A673 (cell line): ENCODE measurements at regions of chr14 and their contacts with region 1.

Region 1: DNA sequence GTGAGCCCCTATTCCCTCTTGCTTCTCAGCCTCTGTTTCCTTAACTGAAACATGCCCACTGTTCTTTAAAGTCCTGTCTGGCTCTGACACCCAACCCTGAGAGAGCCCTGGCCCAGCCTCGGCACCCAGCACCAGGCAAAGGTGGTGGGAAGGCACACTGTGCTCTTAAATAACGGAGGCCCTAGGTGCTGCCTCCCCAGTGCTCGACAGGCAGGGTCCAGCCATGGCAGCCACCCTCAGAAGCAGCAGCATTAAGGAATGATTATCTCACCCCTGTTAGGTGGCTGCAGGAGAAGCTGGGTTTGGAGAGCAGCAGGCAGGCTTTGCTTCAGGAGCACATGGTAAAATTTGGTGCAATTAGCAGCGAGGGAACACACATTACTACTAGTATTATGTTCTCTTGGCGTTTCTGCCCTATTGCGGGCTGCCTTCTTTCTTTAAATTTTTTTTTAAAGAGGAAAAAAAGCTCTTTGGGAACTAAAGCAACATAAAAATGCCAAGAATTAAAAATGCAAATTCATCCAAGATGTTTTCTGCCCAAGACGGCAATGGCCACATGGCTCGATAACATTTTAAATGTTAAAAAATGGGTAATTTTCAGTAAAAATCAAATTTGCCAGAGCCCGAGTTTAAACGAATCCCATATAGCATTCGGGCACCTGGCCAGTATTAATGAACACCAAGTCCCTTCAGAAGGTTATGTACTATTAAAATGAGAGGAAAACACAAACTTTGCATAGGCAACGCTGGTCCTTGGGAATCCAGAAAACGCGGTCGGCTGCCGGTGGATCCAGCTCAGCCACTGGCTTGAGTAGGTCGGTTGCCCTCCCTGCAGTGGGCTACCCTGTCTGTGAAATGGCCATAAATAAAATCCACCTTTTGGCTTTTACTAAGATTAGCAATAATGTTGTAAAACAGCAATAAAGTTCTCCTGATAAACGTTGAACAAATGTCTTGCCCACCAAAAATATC is 152.2 kb downstream of the BCL11B start:
- DNase-seq: no peak
- H3K4me3 ChIP-seq: no peak overlapping the region
- H3K27ac ChIP-seq: no peak overlapping the region
- H3K4me1 ChIP-seq: no peaks in the 10 kb centered on the region
- H3K27me3 ChIP-seq: no peaks in the 10 kb centered on the region
- CTCF ChIP-seq: no peak

Region 2: GRCh38 chr14:97762386-97762785 is 1357.5 kb before region 1 on chr14:
- CTCF ChIA-PET with region 1: interaction called, 10 read pairs
- POLR2A ChIA-PET with region 1: no interaction called
- intact Hi-C with region 1: no loop called
- DNase-seq: peak; percentile 31
- H3K4me3 ChIP-seq: no peak overlapping the region
- H3K27ac ChIP-seq: no peak overlapping the region
- H3K4me1 ChIP-seq: no peaks in the 10 kb centered on the region
- H3K27me3 ChIP-seq: no peaks in the 10 kb centered on the region
- CTCF ChIP-seq: no peak

Region 3: GRCh38 chr14:98906123-98906995 is 213.5 kb before region 1 on chr14:
- CTCF ChIA-PET with region 1: no interaction called
- POLR2A ChIA-PET with region 1: no interaction called
- intact Hi-C with region 1: no loop called
- DNase-seq: peak; percentile 26
- H3K4me3 ChIP-seq: no peak overlapping the region
- H3K27ac ChIP-seq: no peak overlapping the region
- H3K4me1 ChIP-seq: peaks cover 5% of the 10 kb centered on the region
- H3K27me3 ChIP-seq: no peaks in the 10 kb centered on the region
- CTCF ChIP-seq: no peak

Region 4: GRCh38 chr14:99454246-99454645 is 334.4 kb after region 1 on chr14:
- CTCF ChIA-PET with region 1: no interaction called
- POLR2A ChIA-PET with region 1: no interaction called
- intact Hi-C with region 1: no loop called
- DNase-seq: no peak
- H3K4me3 ChIP-seq: no peak overlapping the region
- H3K27ac ChIP-seq: no peak overlapping the region
- H3K4me1 ChIP-seq: no peaks in the 10 kb centered on the region
- H3K27me3 ChIP-seq: no peaks in the 10 kb centered on the region
- CTCF ChIP-seq: no peak